HAP-1 (cell line): ENCODE measurements at regions of chr10 and their contacts with region 1.

Region 1: GRCh38 chr10:23158370-23158769 is 33.7 kb upstream of the PTF1A start:
- DNase-seq: peak; percentile 72 to 74
- H3K4me3 ChIP-seq: no peak overlapping the region
- H3K4me1 ChIP-seq: peaks cover 3% of the 10 kb centered on the region
- H3K27me3 ChIP-seq: peaks cover 2% of the 10 kb centered on the region; the same call in 1 of the 2 replicates

Region 2: GRCh38 chr10:23293145-23293724 is 134.9 kb after region 1 on chr10:
- in situ Hi-C with region 1: loop called (anchors 5 kb)
- DNase-seq: peak; percentile 74 to 82
- H3K4me3 ChIP-seq: no peak overlapping the region
- H3K4me1 ChIP-seq: peaks cover 40% of the 10 kb centered on the region
- H3K27me3 ChIP-seq: no peaks in the 10 kb centered on the region

Region 3: DNA sequence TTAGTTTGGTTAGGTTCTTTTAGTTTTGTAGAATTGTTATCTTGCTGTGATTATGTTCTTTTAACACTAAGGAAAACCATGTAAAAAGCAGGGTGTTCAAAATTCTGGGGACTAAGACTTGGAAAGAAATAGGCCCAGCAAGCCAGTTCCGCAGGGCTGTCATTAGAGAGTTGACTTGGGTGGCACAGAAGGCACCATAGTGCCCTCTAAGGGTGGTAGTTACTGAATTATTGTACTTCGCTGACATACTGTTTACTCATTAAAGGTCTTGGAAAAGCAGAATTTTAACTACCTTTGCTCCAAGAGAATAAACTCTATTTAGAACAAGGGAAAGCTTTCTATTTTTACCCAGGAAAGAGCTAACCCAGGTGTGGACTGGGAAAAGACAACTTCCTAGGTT is 367.0 kb after region 1 on chr10:
- in situ Hi-C with region 1: loop called (anchors 25 kb)
- DNase-seq: no peak
- H3K4me3 ChIP-seq: no peak overlapping the region
- H3K4me1 ChIP-seq: no peaks in the 10 kb centered on the region
- H3K27me3 ChIP-seq: no peaks in the 10 kb centered on the region

Region 4: GRCh38 chr10:23694446-23694920 is 536.1 kb after region 1 on chr10:
- in situ Hi-C with region 1: loop called (anchors 10 kb)
- DNase-seq: no peak
- H3K4me3 ChIP-seq: no peak overlapping the region
- H3K4me1 ChIP-seq: no peaks in the 10 kb centered on the region
- H3K27me3 ChIP-seq: peaks cover 25% of the 10 kb centered on the region

Region 5: GRCh38 chr10:23994479-23995046 is 836.2 kb after region 1 on chr10:
- in situ Hi-C with region 1: loop called (anchors 25 kb)
- DNase-seq: peak; percentile 49 to 79
- H3K4me3 ChIP-seq: no peak overlapping the region
- H3K4me1 ChIP-seq: no peaks in the 10 kb centered on the region
- H3K27me3 ChIP-seq: peaks cover 37% of the 10 kb centered on the region

Region 6: GRCh38 chr10:24503461-24504320 is 1345.3 kb after region 1 on chr10:
- in situ Hi-C with region 1: loop called (anchors 25 kb)
- DNase-seq: peak; percentile 42 to 70
- H3K4me3 ChIP-seq: no peak overlapping the region
- H3K4me1 ChIP-seq: peaks cover 4% of the 10 kb centered on the region
- H3K27me3 ChIP-seq: no peaks in the 10 kb centered on the region